CD8-positive, alpha-beta T cell (primary cell): ENCODE measurements at regions of chr1 and their contacts with region 1.

Region 1: GRCh38 chr1:193183019-193183627 is 3.3 kb downstream of the B3GALT2 start:
- DNase-seq: peak in 3 of 9 experiments; percentile 18 to 71 (median 66)
- ATAC-seq: peak; percentile 76
- H3K4me3 ChIP-seq: no peak overlapping the region
- H3K4me3 Mint-ChIP-seq: peak overlapping the region; percentile 38
- H3K27ac ChIP-seq: no peak overlapping the region
- H3K27ac Mint-ChIP-seq: no peak overlapping the region
- H3K4me1 ChIP-seq: peaks cover 34% of the 10 kb centered on the region
- H3K4me1 Mint-ChIP-seq: peaks cover 54% of the 10 kb centered on the region
- H3K27me3 ChIP-seq: no peaks in the 10 kb centered on the region
- H3K27me3 Mint-ChIP-seq: no peaks in the 10 kb centered on the region
- CTCF ChIP-seq: peak; percentile 99

Region 2: GRCh38 chr1:192974701-192975100 is 208.4 kb before region 1 on chr1:
- CTCF ChIA-PET with region 1: no interaction called
- POLR2A ChIA-PET with region 1: no interaction called
- intact Hi-C with region 1: no loop called
- DNase-seq: no peak
- ATAC-seq: no peak
- H3K4me3 ChIP-seq: no peak overlapping the region
- H3K4me3 Mint-ChIP-seq: no peak overlapping the region
- H3K27ac ChIP-seq: no peak overlapping the region
- H3K27ac Mint-ChIP-seq: no peak overlapping the region
- H3K4me1 ChIP-seq: no peaks in the 10 kb centered on the region
- H3K4me1 Mint-ChIP-seq: no peaks in the 10 kb centered on the region
- H3K27me3 ChIP-seq: no peaks in the 10 kb centered on the region
- H3K27me3 Mint-ChIP-seq: no peaks in the 10 kb centered on the region
- CTCF ChIP-seq: no peak

Region 3: DNA sequence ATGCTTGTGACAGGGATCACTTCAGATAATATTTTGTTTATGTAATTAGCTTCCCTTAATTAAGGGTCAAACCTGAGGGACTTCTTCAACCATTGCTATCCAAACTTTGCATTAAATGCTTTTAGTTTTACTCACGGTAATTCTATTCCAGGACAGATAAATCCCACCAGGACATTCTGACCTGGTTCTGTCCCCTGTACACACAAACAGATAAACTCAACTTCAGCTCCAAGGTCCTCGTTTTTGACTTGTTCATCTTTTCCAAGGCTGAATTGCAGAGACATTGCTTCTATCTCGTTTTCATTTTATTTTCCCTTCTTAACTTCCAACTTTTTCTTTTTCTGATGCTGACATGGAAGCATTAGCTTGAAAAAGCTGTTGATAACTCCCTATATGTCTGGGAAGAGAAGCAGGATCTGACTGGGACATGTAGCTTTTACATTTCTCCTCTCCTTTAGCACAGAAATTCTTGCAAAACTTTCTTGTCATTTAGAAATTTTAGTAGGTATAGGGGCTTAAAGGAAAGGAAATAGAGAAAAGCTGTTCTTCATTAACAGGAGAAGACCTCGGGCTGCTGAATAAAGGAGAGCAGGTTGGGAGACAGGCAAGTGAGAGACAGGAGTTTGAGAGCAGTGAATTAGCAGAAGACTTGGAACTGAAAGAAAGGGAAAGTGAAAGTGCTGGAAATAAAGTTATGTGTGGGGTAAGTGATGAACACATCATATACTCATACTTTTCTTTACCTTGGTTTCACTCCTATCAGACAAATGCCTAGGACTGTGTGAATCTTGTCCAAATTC is 235.0 kb after region 1 on chr1:
- CTCF ChIA-PET with region 1: no interaction called
- POLR2A ChIA-PET with region 1: no interaction called
- intact Hi-C with region 1: loop called in 1 of 2 experiments (anchors 5 kb)
- DNase-seq: peak in 2 of 9 experiments; percentile 49 to 67
- ATAC-seq: peak; percentile 78
- H3K4me3 ChIP-seq: peak overlapping the region; percentile 42 to 49
- H3K4me3 Mint-ChIP-seq: peak overlapping the region; percentile 80
- H3K27ac ChIP-seq: peak overlapping the region; percentile 34 to 46
- H3K27ac Mint-ChIP-seq: peak overlapping the region; percentile 87
- H3K4me1 ChIP-seq: peaks cover 14% of the 10 kb centered on the region
- H3K4me1 Mint-ChIP-seq: peaks cover 39% of the 10 kb centered on the region
- H3K27me3 ChIP-seq: no peaks in the 10 kb centered on the region
- H3K27me3 Mint-ChIP-seq: no peaks in the 10 kb centered on the region
- CTCF ChIP-seq: no peak

Region 4: GRCh38 chr1:193619911-193620310 is 436.8 kb after region 1 on chr1:
- CTCF ChIA-PET with region 1: no interaction called
- POLR2A ChIA-PET with region 1: no interaction called
- intact Hi-C with region 1: loop called in 1 of 2 experiments (anchors 5 kb)
- DNase-seq: no peak
- ATAC-seq: no peak
- H3K4me3 ChIP-seq: no peak overlapping the region
- H3K4me3 Mint-ChIP-seq: no peak overlapping the region
- H3K27ac ChIP-seq: no peak overlapping the region
- H3K27ac Mint-ChIP-seq: no peak overlapping the region
- H3K4me1 ChIP-seq: no peaks in the 10 kb centered on the region
- H3K4me1 Mint-ChIP-seq: no peaks in the 10 kb centered on the region
- H3K27me3 ChIP-seq: no peaks in the 10 kb centered on the region
- H3K27me3 Mint-ChIP-seq: no peaks in the 10 kb centered on the region
- CTCF ChIP-seq: no peak

Region 5: GRCh38 chr1:193754732-193755427 is 571.8 kb after region 1 on chr1:
- CTCF ChIA-PET with region 1: interaction called, 3 read pairs
- POLR2A ChIA-PET with region 1: no interaction called
- intact Hi-C with region 1: loop called in 1 of 2 experiments (anchors 2 kb)
- DNase-seq: peak in 2 of 9 experiments; percentile 3 to 10
- ATAC-seq: no peak
- H3K4me3 ChIP-seq: no peak overlapping the region
- H3K4me3 Mint-ChIP-seq: no peak overlapping the region
- H3K27ac ChIP-seq: no peak overlapping the region
- H3K27ac Mint-ChIP-seq: no peak overlapping the region
- H3K4me1 ChIP-seq: no peaks in the 10 kb centered on the region
- H3K4me1 Mint-ChIP-seq: peaks cover 2% of the 10 kb centered on the region
- H3K27me3 ChIP-seq: no peaks in the 10 kb centered on the region
- H3K27me3 Mint-ChIP-seq: no peaks in the 10 kb centered on the region
- CTCF ChIP-seq: no peak

Region 6: GRCh38 chr1:193905288-193906072 is 722.4 kb after region 1 on chr1:
- CTCF ChIA-PET with region 1: no interaction called
- POLR2A ChIA-PET with region 1: no interaction called
- intact Hi-C with region 1: loop called in 1 of 2 experiments (anchors 10 kb)
- DNase-seq: no peak
- ATAC-seq: no peak
- H3K4me3 ChIP-seq: no peak overlapping the region
- H3K4me3 Mint-ChIP-seq: no peak overlapping the region
- H3K27ac ChIP-seq: no peak overlapping the region
- H3K27ac Mint-ChIP-seq: no peak overlapping the region
- H3K4me1 ChIP-seq: no peaks in the 10 kb centered on the region
- H3K4me1 Mint-ChIP-seq: no peaks in the 10 kb centered on the region
- H3K27me3 ChIP-seq: no peaks in the 10 kb centered on the region
- H3K27me3 Mint-ChIP-seq: no peaks in the 10 kb centered on the region
- CTCF ChIP-seq: no peak

Region 7: GRCh38 chr1:194159940-194160339 is 976.8 kb after region 1 on chr1:
- CTCF ChIA-PET with region 1: no interaction called
- POLR2A ChIA-PET with region 1: no interaction called
- intact Hi-C with region 1: loop called in 1 of 2 experiments (anchors 10 kb)
- DNase-seq: no peak
- ATAC-seq: no peak
- H3K4me3 ChIP-seq: no peak overlapping the region
- H3K4me3 Mint-ChIP-seq: no peak overlapping the region
- H3K27ac ChIP-seq: no peak overlapping the region
- H3K27ac Mint-ChIP-seq: no peak overlapping the region
- H3K4me1 ChIP-seq: no peaks in the 10 kb centered on the region
- H3K4me1 Mint-ChIP-seq: no peaks in the 10 kb centered on the region
- H3K27me3 ChIP-seq: no peaks in the 10 kb centered on the region
- H3K27me3 Mint-ChIP-seq: no peaks in the 10 kb centered on the region
- CTCF ChIP-seq: no peak